ENCODE measurements at regions of chr5 and their contacts with region 1.

Region 1: DNA sequence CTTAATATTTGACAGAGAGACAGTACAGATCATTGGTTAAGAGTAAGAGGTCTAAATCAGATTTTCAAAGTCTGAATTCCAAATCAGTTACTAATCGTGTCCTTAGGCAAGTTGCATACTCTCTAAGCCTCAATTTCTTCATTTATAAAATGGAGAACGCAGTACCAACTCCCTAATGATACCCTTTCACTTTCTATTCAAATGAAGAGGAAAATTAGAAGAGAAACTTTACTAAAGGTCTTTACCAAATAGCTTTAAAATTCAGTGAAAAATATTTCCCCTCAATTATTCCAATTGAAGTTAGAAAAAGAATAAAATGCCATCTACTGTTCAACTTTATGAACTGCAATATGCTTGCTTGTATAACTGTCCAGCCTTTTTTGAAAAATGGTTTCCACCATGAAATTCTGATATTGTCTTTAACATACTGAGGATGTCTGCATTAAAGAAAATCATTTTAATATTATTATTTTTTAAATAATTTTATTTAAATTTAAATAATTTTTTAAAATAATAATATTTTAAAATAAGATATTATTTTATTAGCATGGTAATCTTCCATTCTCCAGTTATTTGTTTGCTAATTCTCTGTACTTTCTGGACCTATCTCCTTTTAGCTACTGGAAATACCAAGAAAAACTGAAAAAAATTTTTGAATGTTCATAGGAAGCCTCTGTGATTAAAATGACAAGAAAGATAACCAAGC is 36.0 kb downstream of the POC5 start:
- DNase-seq: peak; percentile 67

Region 2: GRCh38 chr5:75351139-75351926 is 329.9 kb before region 1 on chr5:
- in situ Hi-C with region 1: loop called (anchors 10 kb)
- DNase-seq: no peak

Measured in G401 (cell line).